CD4-positive, alpha-beta memory T cell (primary cell): ENCODE measurements at regions of chr11 and their contacts with region 1.

Region 1: DNA sequence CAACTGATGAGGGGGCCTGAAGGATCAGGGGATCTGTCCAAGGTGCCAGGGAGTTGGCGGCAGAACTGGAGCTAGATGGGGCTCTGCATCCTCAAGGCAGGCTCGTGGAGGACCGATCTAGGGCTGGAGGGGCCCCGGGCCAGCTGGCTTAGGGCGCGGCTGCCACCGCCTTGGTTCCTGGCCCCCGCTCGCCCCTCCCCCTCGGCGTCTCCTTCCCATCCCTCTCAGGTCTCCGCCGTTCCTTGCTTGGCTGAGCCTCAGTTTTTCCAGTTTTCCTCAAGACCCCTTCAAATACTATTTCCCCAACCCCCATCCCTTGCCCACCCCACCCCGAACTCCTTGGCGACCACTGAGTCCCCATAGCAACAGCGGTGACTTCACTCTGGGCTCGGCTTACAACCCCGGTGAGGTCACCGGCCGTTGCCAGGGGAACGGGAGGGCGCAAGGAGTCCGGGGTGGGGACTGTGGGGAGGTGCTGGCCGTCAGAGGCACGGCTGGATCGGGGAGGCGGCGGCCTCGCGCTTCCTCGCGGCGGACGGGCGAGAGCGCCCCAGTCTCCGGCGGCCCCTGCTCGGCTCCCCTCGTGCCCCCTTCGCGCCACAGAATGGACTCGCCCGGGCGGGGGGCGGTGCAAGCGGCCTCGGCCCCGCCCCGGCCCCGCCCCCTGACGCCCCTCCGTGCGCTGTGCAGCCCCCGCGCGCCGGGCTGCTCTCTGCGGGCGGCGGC is 7.5 kb downstream of the FREY1 start:
- DNase-seq: peak; percentile 53 to 81 (median 59)
- H3K4me3 ChIP-seq: peak overlapping the region in 1 of 2 donors; percentile 32
- H3K4me3 Mint-ChIP-seq: peak overlapping the region; percentile 48 to 81 (median 71)
- H3K27ac ChIP-seq: no peak overlapping the region
- H3K27ac Mint-ChIP-seq: peak overlapping the region; percentile 9 to 80 (median 32)
- H3K4me1 ChIP-seq: peaks cover 13% of the 10 kb centered on the region
- H3K4me1 Mint-ChIP-seq: peaks cover 0 to 14% (median 0%) of the 10 kb centered on the region in 4 donors
- H3K27me3 ChIP-seq: peaks cover 21% of the 10 kb centered on the region
- H3K27me3 Mint-ChIP-seq: peaks cover 19 to 20% of the 10 kb centered on the region in 2 donors

Region 2: DNA sequence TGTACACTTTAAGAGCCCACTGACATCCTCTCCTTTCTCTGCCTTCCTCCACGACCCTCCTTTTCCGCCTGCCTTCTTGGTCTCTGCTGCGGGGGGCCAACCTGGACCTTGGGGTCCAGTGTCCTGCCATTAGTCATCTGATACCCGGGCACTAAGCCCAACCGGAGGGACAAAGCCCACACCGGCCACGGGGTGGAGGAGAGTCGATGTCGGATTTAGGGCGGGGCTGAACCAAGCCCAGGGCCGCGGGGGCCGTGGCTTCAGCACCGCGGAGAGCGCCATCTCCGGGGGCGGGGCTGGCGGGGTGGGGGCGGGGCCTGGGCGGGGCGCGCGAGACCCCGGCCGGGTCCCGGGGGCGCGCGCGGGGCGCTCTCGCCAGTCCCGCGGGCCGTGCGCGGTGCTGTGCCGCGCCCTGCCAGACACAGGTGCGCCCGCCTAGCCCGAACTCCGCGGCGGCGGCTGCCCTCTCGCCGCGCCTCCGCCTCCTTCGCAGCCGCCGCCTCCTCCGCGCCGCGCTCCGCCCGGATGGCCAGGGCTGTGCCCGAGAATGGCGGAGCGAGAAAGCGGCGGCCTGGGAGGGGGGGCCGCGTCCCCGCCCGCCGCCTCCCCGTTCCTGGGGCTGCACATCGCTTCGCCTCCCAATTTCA is 14.2 kb before region 1 on chr11 and contains the start of gene MAPK8IP1:
- CTCF ChIA-PET with region 1: no interaction called
- POLR2A ChIA-PET with region 1: no interaction called
- intact Hi-C with region 1: loop called (anchors 2 kb)
- DNase-seq: peak; percentile 47 to 67 (median 58)
- H3K4me3 ChIP-seq: no peak within 1 kb of the TSS
- H3K4me3 Mint-ChIP-seq: peak within 1 kb of the TSS; percentile 69 to 84 (median 76)
- H3K27ac ChIP-seq: no peak within 1 kb of the TSS
- H3K27ac Mint-ChIP-seq: peak within 1 kb of the TSS in 6 of 7 donors; percentile 29 to 75 (median 52)
- H3K4me1 ChIP-seq: peaks cover 5% of the 10 kb centered on the region
- H3K4me1 Mint-ChIP-seq: peaks cover 8 to 16% (median 11%) of the 10 kb centered on the region in 4 donors
- H3K27me3 ChIP-seq: no peaks in the 10 kb centered on the region
- H3K27me3 Mint-ChIP-seq: peaks cover 0 to 4% of the 10 kb centered on the region in 2 donors
- total RNA-seq, gene MAPK8IP1: 0.73 to 0.86 TPM